Activated CD4-positive, alpha-beta T cell treated with anti-CD3 and anti-CD28 coated beads, Interleukin-2, amount 10 ng/mL, durations not matched to agents 24 days and 14 days (primary cell): ENCODE measurements at regions of chr18 and their contacts with region 1.

Region 1: GRCh38 chr18:63578357-63578958 is 8.7 kb upstream of the SERPINB13 start:
- DNase-seq: peak; percentile 78
- H3K4me3 Mint-ChIP-seq: no peak overlapping the region
- H3K27ac Mint-ChIP-seq: no peak overlapping the region
- H3K4me1 Mint-ChIP-seq: no peaks in the 10 kb centered on the region
- H3K27me3 Mint-ChIP-seq: peaks cover 22% of the 10 kb centered on the region

Region 2: DNA sequence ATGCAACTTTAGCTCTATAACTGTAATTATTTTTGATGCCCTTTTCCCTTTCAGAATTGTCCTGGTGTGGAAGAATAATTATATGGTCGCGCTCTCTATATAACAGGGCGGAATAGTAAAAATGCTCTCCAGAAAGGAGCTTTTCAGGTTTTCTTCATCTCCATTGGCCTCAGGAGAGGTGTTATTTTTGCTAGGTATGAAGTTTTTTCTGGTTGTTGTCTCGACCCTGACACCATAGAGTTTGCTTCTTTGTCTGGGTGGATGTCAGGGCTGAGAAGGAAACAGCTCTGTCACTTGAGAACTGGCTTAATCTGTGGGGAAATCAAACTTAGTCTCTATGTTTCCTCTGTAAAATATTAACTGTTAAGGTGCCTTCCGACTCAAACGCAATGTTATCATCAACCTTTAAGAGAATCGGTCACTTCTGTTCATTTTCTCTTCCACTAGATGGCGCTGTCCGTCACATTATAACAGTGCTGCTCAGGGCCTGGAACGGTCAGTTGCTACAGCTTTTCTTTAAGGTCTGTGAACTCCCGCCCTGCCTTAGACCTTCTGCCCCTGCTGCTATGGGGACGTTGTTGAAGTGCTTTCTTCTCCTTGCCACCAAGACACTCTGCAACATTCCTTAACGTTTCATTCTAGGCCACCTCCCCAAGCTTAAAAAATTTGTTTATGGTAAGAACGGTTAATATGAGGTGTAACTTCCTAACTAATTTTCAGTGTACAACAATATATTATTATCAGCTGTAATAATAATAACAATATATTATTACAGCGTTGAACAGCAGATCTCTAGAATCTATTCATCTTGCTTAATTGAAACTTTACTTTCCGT is 60.1 kb before region 1 on chr18:
- intact Hi-C with region 1: loop called (anchors 1 kb)
- DNase-seq: peak; percentile 88
- H3K4me3 Mint-ChIP-seq: no peak overlapping the region
- H3K27ac Mint-ChIP-seq: no peak overlapping the region
- H3K4me1 Mint-ChIP-seq: no peaks in the 10 kb centered on the region
- H3K27me3 Mint-ChIP-seq: peaks cover 34% of the 10 kb centered on the region

Region 3: DNA sequence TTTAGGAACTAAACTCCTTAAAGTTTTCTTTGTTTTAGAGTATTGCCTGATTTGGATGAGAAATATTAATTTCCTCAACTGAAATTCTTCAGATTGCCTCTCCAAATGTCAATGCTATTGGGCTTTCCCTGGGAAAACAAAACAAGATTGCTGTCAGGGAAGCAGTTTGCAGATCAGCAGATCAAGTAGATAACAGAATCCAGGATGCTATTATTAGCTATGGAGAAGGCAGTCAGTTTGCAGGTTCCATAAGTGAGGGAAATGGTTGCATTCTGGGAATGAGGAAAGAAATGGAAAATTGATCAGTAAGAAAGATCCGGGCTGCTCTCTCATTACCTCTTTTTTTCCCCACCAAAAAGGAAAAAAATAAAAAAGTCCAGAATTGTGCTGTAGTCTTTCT is 559.5 kb after region 1 on chr18:
- intact Hi-C with region 1: no loop called
- DNase-seq: no peak
- H3K4me3 Mint-ChIP-seq: no peak overlapping the region
- H3K27ac Mint-ChIP-seq: no peak overlapping the region
- H3K4me1 Mint-ChIP-seq: no peaks in the 10 kb centered on the region
- H3K27me3 Mint-ChIP-seq: no peaks in the 10 kb centered on the region